Common myeloid progenitor, CD34-positive (primary cell): ENCODE measurements at regions of chr12 and their contacts with region 1.

Region 1: DNA sequence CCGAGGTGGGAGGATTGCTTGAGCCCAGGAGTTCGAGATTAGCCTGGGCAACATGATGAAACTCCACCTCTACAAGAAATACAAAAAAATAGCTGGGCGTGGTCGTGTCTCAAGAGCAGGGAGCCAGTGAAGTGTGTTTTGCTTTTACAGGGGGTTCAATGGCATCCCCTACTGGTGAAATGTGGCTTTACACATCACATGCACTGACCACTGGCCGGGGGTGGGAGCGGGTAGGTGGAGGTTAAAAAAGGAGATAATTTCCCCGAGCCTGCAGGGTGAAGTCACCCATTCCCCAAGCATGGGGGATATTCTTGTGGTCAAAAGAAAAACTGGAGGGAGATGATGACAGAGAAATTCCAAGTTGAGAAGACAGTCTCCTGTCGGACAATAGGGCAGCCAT is 63.6 kb upstream of the PWP1 start:
- DNase-seq: peak in 2 of 3 donors; percentile 3 to 9
- H3K4me3 ChIP-seq: no peak overlapping the region
- H3K27ac ChIP-seq: no peak overlapping the region
- H3K4me1 ChIP-seq: no peaks in the 10 kb centered on the region
- H3K27me3 ChIP-seq: no peaks in the 10 kb centered on the region

Region 2: DNA sequence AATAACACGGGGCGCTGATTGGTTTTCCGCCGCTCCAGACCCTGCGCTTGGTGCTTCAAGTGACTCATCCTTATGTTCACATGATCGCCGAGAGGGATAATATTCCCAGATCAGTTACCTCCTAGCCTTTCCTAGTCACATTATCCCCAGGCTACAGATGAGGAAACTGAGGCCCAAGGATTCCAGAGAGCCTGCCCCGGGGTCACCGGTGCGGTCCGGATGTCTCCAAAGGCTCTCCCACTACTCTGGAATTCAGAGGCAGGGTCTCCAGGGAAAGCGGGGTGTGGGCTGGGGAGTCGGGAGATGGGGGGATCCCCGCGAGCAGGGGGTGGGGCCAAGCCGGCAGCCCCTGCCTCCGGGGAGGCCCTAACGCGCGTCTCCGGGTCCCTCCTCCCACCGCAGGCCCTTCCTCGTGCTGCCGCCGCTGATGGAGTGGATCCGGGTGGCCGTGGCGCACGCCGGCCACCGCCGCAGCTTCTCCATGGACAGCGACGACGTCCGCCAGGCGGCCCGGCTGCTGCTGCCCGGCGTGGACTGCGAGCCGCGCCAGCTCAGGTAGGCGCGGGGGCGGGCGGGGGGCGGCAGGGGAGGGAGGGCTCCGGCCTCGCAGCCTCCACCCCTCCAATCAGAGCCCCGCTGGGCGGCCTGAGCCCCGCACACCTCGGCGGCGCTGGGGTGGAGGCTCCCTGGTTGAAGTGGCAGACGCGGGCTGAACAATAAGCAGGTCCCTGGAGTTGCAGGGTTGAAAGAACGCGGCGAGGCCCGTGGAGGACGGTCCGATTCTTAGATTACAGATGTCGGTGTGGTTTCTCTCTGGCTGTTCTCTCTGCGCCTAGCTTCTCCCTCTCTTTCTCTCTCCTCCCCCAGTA is 41.0 kb before region 1 on chr12:
- CTCF ChIA-PET with region 1: no interaction called
- POLR2A ChIA-PET with region 1: no interaction called
- DNase-seq: no peak
- H3K4me3 ChIP-seq: no peak overlapping the region
- H3K27ac ChIP-seq: no peak overlapping the region
- H3K4me1 ChIP-seq: peaks cover 0 to 1% (median 0%) of the 10 kb centered on the region in 4 experiments
- H3K27me3 ChIP-seq: peaks cover 0 to 26% (median 0%) of the 10 kb centered on the region in 5 experiments

Region 3: GRCh38 chr12:107607464-107608392 is 14.3 kb before region 1 on chr12:
- CTCF ChIA-PET with region 1: interaction called, 55 read pairs
- POLR2A ChIA-PET with region 1: interaction called, 3 read pairs
- DNase-seq: peak; percentile 70 to 87 (median 77)
- H3K4me3 ChIP-seq: no peak overlapping the region
- H3K27ac ChIP-seq: no peak overlapping the region
- H3K4me1 ChIP-seq: no peaks in the 10 kb centered on the region
- H3K27me3 ChIP-seq: no peaks in the 10 kb centered on the region